RWPE1 (cell line): ENCODE measurements at regions of chr17 and their contacts with region 1.

Region 1: DNA sequence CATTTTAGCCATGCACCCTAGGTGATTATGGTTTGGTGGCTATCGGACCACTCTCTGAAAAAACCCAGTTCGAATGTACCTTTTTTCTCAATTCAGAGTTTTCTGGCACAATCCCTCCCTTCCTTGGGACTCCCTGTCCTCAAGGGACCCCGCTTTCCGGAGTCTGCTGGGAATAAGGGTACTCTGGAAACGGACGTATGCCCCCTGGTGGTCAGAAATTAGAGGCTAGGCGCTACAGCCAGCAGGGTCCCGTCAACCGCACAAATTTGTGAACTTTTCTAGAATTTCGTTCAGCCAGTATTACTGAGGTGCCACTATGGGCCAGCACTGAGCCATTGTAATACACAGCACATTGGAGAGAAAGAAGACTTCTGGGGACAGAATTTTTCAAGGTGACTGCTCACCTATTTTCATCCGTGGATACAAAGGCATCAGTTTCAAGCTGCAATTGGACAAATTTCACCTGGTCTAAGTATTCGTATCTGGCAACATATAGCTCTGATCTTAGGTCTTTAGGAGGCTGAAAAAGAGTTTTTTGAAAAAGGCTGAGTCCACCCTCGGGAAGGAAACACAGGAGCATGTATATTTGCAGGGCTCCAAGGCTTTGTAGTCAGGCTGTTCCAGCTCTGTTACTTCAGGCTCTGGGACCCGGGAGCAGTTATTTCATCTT is 27.1 kb upstream of the CRYBA1 start:
- DNase-seq: peak; percentile 79
- H3K27ac ChIP-seq: no peak overlapping the region
- CTCF ChIP-seq: peak; percentile 92

Region 2: DNA sequence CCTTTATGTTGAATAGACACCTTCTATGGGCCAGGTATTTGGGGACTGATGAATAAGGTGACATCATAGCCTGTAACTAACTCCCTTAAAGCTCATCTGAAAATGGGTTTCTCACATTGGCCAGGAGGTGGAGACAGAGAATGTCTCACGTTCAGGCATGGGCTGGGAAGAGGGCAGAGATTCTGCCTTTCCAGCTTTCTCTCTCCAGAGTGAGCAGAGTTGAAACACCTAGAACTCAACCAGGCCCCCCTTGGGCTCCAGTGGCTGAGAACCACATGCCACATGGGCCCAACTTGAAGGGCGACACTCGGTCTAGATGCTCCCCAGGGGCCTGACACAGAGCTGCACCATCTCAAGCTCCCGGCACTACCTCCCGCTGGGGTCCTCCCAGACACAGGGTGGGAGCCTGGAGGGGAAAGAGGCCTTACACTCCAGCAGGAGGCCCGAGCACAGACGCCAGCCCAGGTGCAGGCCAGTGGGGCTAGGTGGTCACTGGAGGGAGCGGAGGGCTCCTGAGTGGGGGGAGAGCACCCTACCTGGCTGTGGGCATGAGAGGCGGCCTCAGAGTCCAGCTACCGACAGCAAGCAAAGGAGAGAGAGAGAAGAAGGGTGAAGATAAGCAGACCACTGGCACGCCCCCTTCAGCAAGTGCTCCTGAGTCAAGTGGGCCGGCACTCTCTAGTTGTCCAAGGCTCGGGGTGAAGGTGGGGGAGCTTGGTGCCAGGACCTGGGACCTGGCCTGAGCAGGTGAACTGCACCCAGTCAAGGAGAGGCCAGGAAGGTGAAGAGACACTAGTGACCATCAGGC is 95.2 kb before region 1 on chr17:
- CTCF ChIA-PET with region 1: interaction called, 20 read pairs
- POLR2A ChIA-PET with region 1: no interaction called
- DNase-seq: peak; percentile 63
- H3K27ac ChIP-seq: peak overlapping the region; percentile 66
- CTCF ChIP-seq: peak; percentile 69

Region 3: GRCh38 chr17:29148790-29149430 is 70.6 kb before region 1 on chr17:
- CTCF ChIA-PET with region 1: interaction called, 45 read pairs
- POLR2A ChIA-PET with region 1: no interaction called
- DNase-seq: peak; percentile 89
- H3K27ac ChIP-seq: peak overlapping the region; percentile 97
- CTCF ChIP-seq: peak; percentile 92

Region 4: GRCh38 chr17:29180034-29180787 is 39.3 kb before region 1 on chr17 and contains the start of gene MYO18A:
- CTCF ChIA-PET with region 1: interaction called, 13 read pairs
- POLR2A ChIA-PET with region 1: no interaction called
- DNase-seq: peak; percentile 87
- H3K27ac ChIP-seq: peak within 1 kb of the TSS; percentile 94
- CTCF ChIP-seq: peak; percentile 90

Region 5: DNA sequence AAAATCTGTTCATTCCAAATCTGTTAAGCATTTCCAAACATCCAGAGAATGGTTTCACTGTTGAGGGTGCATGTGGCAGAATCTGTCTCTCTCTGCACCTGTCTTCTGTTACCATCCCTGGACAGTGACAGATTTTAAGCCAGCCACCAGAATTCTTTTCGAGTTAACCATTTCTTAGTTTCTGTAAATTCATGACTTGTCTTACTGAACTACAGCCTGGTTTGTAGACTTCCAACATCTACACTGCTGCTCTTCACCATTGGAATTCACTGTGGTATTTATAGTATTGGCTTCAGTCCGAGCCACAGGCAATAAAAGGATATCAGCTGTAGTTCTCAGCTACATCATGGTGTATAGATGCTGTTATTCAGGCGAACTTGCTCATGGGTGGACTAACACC is 1305.3 kb after region 1 on chr17:
- CTCF ChIA-PET with region 1: interaction called, 10 read pairs
- POLR2A ChIA-PET with region 1: no interaction called
- DNase-seq: no peak
- H3K27ac ChIP-seq: no peak overlapping the region
- CTCF ChIP-seq: no peak